PC-9 (cell line): ENCODE measurements at regions of chr2 and their contacts with region 1.

Region 1: DNA sequence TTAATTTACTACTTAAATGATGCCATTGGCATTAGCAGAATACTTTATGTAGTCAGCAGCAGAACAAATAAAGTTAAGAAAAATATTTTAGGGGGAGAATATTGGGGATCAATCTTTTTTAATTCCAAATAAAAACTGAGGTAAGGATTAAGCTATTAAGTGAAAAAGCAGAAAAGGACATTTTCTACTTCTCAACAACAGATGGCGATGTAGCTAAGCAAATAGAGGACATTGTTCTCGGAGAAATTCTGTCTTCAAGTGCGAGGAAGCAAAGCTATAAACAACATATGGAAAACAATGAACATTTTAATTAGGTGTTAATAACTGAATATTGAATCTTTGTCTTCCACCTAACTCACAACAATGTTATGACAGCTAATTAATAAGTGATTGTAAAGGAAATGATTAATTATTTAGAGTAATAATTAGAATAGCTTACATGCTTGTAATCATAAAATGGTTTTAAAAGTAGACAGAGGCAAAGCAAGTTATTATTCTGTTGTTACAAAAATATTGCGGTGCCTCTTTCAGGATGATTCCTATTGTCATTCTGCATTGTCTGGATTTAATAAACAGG is 32.9 kb upstream of the CCDC93 start:
- DNase-seq: peak in 1 of 2 experiments; percentile 62
- H3K4me3 ChIP-seq: no peak overlapping the region
- H3K27ac ChIP-seq: peak overlapping the region; percentile 71
- H3K4me1 ChIP-seq: peaks cover 52% of the 10 kb centered on the region
- H3K27me3 ChIP-seq: no peaks in the 10 kb centered on the region
- CTCF ChIP-seq: peak; percentile 88

Region 2: GRCh38 chr2:117994729-117995128 is 52.0 kb before region 1 on chr2:
- CTCF ChIA-PET with region 1: no interaction called
- POLR2A ChIA-PET with region 1: no interaction called
- intact Hi-C with region 1: no loop called
- DNase-seq: no peak
- H3K4me3 ChIP-seq: no peak overlapping the region
- H3K27ac ChIP-seq: no peak overlapping the region
- H3K4me1 ChIP-seq: no peaks in the 10 kb centered on the region
- H3K27me3 ChIP-seq: no peaks in the 10 kb centered on the region
- CTCF ChIP-seq: no peak

Region 3: GRCh38 chr2:118061135-118061955 is 14.6 kb after region 1 on chr2:
- CTCF ChIA-PET with region 1: no interaction called
- POLR2A ChIA-PET with region 1: no interaction called
- intact Hi-C with region 1: loop called (anchors 1 kb)
- DNase-seq: peak in 1 of 2 experiments; percentile 70
- H3K4me3 ChIP-seq: no peak overlapping the region
- H3K27ac ChIP-seq: no peak overlapping the region
- H3K4me1 ChIP-seq: peaks cover 11% of the 10 kb centered on the region
- H3K27me3 ChIP-seq: no peaks in the 10 kb centered on the region
- CTCF ChIP-seq: peak; percentile 76

Region 4: GRCh38 chr2:118088051-118089024 is 41.6 kb after region 1 on chr2 and contains the start of gene INSIG2:
- CTCF ChIA-PET with region 1: interaction called, 14 read pairs
- POLR2A ChIA-PET with region 1: interaction called, 5 read pairs
- intact Hi-C with region 1: loop called (anchors 1 kb)
- DNase-seq: peak; percentile 99 to 100
- H3K4me3 ChIP-seq: peak within 1 kb of the TSS; percentile 79
- H3K27ac ChIP-seq: peak within 1 kb of the TSS; percentile 94
- H3K4me1 ChIP-seq: peaks cover 69% of the 10 kb centered on the region
- H3K27me3 ChIP-seq: no peaks in the 10 kb centered on the region
- CTCF ChIP-seq: peak; percentile 13; the same call in 1 of the 2 replicates
- total RNA-seq, gene INSIG2: 33.6 and 54.8 TPM in 2 replicates

Region 5: GRCh38 chr2:118122594-118123281 is 76.0 kb after region 1 on chr2:
- CTCF ChIA-PET with region 1: interaction called, 4 read pairs
- POLR2A ChIA-PET with region 1: interaction called, 7 read pairs
- intact Hi-C with region 1: loop called (anchors 1 kb)
- DNase-seq: peak; percentile 26 to 74
- H3K4me3 ChIP-seq: peak overlapping the region; percentile 12; the same call in 1 of the 2 replicates
- H3K27ac ChIP-seq: peak overlapping the region; percentile 99
- H3K4me1 ChIP-seq: peaks cover 63% of the 10 kb centered on the region
- H3K27me3 ChIP-seq: no peaks in the 10 kb centered on the region
- CTCF ChIP-seq: no peak; the same call in 1 of the 2 replicates

Region 6: DNA sequence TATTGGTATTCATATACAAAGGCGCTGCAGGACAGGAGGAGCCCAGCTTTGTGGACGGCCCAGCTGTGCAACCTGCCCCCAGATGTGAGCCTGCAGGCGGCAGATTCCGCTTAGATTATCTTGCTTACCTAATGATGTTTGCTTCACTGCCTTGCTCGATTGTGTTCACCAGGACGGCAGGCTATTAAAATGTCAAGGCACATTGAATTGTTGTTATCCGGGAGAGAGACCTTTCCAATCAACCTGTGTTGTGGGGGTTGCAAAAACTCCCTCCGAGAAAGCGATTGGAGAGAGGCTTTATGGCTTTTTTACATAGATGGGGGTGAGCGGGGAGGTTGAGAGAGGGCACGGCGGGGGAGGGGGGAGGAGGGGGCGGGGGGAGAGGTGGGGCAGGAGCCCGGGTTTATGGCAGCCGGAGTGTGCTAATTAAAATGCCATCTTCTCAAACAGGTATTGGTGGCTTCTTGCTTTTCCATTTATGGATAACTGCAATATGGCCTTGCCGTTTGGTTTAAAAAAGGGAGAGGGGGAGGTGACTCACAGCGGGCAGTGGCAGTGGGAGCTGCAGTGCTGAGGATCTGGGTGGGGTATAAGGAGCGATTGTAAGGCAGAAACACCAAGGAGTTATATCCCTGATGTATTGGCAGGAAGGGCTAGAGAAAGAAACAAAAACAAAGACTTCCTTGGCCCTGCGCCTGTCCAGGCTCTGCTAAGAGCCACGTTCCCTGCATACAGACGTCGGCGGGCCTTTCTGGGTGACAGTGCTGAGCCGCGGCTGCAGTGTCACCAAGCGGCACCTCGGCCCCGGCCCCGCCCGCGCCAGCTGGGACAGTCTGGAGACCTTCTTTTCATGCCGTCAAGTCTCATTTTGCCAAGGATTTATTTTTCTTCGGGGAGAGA is 138.7 kb after region 1 on chr2:
- CTCF ChIA-PET with region 1: interaction called, 6 read pairs
- POLR2A ChIA-PET with region 1: interaction called, 3 read pairs
- intact Hi-C with region 1: loop called (anchors 1 kb)
- DNase-seq: peak; percentile 57 to 67
- H3K4me3 ChIP-seq: peak overlapping the region; percentile 75
- H3K27ac ChIP-seq: peak overlapping the region; percentile 92
- H3K4me1 ChIP-seq: peaks cover 23% of the 10 kb centered on the region
- H3K27me3 ChIP-seq: no peaks in the 10 kb centered on the region
- CTCF ChIP-seq: no peak; the same call in 1 of the 2 replicates

Region 7: DNA sequence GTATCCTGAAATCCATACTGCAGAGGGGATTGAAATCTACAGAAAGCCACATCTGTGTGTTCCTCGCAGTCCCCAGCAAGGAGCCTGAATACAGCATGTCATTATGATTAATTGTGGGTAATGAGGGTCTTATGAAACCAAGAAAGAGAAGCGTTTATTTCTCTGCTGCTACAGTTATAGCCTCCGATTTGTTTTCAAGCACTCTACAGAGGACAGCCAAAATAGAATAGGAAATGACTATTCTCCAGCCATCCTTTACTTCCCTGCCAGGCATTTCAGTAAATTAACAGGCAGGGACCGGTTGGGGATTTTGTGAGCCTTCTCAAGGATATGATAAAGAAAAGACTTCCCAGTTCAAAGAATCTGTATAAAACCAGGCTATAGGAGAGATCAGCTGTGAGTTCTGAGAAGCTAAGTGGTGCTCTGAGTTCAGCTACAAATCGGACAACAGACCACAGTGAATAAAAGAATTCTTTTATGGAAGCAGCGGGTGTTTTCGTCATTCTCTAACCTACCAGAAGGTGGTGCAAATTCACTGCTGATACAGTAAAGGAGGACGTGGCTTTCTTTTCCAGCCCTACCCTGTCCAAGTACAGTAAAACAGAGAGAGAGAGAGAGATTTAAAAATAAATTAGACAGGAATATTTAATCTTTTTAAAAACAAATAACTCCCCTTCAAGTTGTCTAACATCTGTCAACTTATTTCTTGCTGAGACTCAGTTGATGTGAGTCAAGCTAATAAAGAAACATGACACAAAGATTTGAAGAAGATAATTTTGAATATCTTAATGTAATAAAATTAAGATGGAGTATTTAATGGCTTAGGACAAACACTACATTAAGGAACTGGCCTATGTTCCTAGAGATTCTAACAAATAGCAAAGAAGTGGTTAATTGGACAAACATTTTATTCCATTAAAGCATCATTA is 175.2 kb after region 1 on chr2:
- CTCF ChIA-PET with region 1: interaction called, 13 read pairs
- POLR2A ChIA-PET with region 1: no interaction called
- intact Hi-C with region 1: loop called (anchors 1 kb)
- DNase-seq: peak; percentile 49 to 64
- H3K4me3 ChIP-seq: no peak overlapping the region
- H3K27ac ChIP-seq: no peak overlapping the region
- H3K4me1 ChIP-seq: peaks cover 4% of the 10 kb centered on the region
- H3K27me3 ChIP-seq: no peaks in the 10 kb centered on the region
- CTCF ChIP-seq: peak; percentile 91

Region 8: GRCh38 chr2:118855451-118856279 is 808.9 kb after region 1 on chr2:
- CTCF ChIA-PET with region 1: interaction called, 10 read pairs
- POLR2A ChIA-PET with region 1: no interaction called
- intact Hi-C with region 1: loop called (anchors 1 kb)
- DNase-seq: peak; percentile 49 to 69
- H3K4me3 ChIP-seq: no peak overlapping the region; the same call in 1 of the 2 replicates
- H3K27ac ChIP-seq: no peak overlapping the region
- H3K4me1 ChIP-seq: peaks cover 9% of the 10 kb centered on the region
- H3K27me3 ChIP-seq: peaks cover 39% of the 10 kb centered on the region
- CTCF ChIP-seq: peak; percentile 98